Posterior cingulate gyrus (tissue), 11 donors: ENCODE measurements at regions of chr12 and their contacts with region 1.

Region 1: GRCh38 chr12:84874125-84874824 is 38.3 kb downstream of the SLC6A15 start:
- DNase-seq: no peak

Region 2: GRCh38 chr12:84361651-84362551 is 512.4 kb before region 1 on chr12:
- intact Hi-C with region 1: no loop called
- DNase-seq: peak in 2 of 10 donors; percentile 75 to 76

Region 3: GRCh38 chr12:84822525-84822924 is 51.8 kb before region 1 on chr12:
- intact Hi-C with region 1: no loop called
- DNase-seq: no peak

Region 4: DNA sequence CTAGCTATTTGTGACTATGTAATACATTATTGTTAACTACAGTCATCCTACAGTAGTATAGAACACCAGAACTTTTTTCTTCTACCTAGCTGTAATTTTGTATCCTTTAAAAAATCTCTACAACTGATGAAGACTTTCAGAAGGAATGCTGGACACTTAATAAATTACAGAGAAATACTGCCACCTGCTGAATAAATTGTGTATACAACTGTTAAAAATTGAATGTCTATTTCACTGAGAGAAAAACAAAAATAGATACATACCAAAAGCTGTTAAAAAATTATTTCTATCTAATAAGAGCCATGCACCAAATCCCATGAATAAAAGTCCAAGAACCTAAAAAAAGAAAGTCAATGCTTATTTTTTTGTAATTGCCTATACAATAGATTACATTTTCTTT is 155.2 kb after region 1 on chr12:
- intact Hi-C with region 1: loop called (anchors 1 kb)
- DNase-seq: no peak